Heart left ventricle (tissue), 16 donors: ENCODE measurements at regions of chr7 and their contacts with region 1.

Region 1: DNA sequence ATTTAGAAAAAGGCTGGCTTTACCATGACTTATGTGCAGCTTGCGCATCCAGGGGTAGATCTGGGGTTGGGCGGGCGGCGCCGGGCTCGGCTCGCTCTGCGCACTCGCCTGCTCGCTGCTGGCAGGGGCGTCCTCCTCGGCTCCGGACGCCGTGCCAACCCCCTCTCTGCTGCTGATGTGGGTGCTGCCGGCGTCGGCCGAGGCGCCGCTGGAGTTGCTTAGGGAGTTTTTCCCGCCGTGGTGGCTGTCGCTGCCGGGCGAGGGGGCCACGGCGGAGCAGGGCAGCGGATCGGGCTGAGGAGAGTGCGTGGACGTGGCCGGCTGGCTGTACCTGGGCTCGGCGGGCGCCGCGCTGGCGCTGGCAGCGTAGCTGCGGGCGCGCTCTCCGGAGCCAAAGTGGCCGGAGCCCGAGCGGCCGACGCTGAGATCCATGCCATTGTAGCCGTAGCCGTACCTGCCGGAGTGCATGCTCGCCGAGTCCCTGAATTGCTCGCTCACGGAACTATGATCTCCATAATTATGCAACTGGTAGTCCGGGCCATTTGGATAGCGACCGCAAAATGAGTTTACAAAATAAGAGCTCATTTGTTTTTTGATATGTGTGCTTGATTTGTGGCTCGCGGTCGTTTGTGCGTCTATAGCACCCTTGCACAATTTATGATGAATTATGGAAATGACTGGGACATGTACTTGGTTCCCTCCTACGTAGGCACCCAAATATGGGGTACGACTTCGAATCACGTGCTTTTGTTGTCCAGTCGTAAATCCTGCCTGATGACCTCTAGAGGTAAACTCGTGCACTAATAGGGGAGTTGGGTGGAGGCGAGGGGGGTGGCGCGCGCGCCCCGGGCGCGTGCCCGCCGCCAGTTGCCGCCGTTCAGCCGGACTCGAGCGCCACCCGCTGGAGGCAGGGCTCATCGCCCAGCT is at the start of gene HOXA5:
- DNase-seq: peak in 1 of 5 donors; percentile 60
- ATAC-seq: peak in 3 of 4 donors; percentile 40 to 73 (median 52)
- H3K4me3 ChIP-seq: peak within 1 kb of the TSS; percentile 18 to 69 (median 48)
- H3K27ac ChIP-seq: peak within 1 kb of the TSS in 3 of 12 donors; percentile 30 to 61 (median 35)
- H3K4me1 ChIP-seq: peaks cover 0 to 53% (median 13%) of the 10 kb centered on the region in 12 donors
- H3K27me3 ChIP-seq: peaks cover 79 to 100% (median 99%) of the 10 kb centered on the region in 9 donors
- CTCF ChIP-seq: peak; percentile 14 to 59 (median 43)
- POLR2A ChIP-seq: peak in 1 of 2 donors; percentile 74
- total RNA-seq, gene HOXA5: 0.28 to 2.8 (median 0.44) TPM in 3 of 9 donors, not detected in the others

Region 2: GRCh38 chr7:26681819-26682418 is 461.4 kb before region 1 on chr7:
- intact Hi-C with region 1: loop called in 1 of 10 experiments (anchors 5 kb)
- DNase-seq: no peak
- ATAC-seq: no peak
- H3K4me3 ChIP-seq: no peak overlapping the region
- H3K27ac ChIP-seq: no peak overlapping the region
- H3K4me1 ChIP-seq: peaks cover 0 to 19% (median 0%) of the 10 kb centered on the region in 12 donors
- H3K27me3 ChIP-seq: peaks cover 0 to 35% (median 0%) of the 10 kb centered on the region in 9 donors
- CTCF ChIP-seq: peak; percentile 42 to 86 (median 72)
- POLR2A ChIP-seq: no peak

Region 3: GRCh38 chr7:26853788-26854393 is 289.4 kb before region 1 on chr7:
- intact Hi-C with region 1: loop called in 2 of 10 experiments (anchors 5 kb)
- DNase-seq: no peak
- ATAC-seq: no peak
- H3K4me3 ChIP-seq: no peak overlapping the region
- H3K27ac ChIP-seq: no peak overlapping the region
- H3K4me1 ChIP-seq: peaks cover 0 to 7% (median 0%) of the 10 kb centered on the region in 12 donors
- H3K27me3 ChIP-seq: peaks cover 0 to 71% (median 20%) of the 10 kb centered on the region in 9 donors
- CTCF ChIP-seq: peak in 11 of 12 donors; percentile 15 to 64 (median 51)
- POLR2A ChIP-seq: no peak

Region 4: GRCh38 chr7:27377988-27378387 is 234.7 kb after region 1 on chr7:
- intact Hi-C with region 1: no loop called
- DNase-seq: no peak
- ATAC-seq: no peak
- H3K4me3 ChIP-seq: no peak overlapping the region
- H3K27ac ChIP-seq: no peak overlapping the region
- H3K4me1 ChIP-seq: no peaks in the 10 kb centered on the region
- H3K27me3 ChIP-seq: peaks cover 0 to 15% (median 0%) of the 10 kb centered on the region in 9 donors
- CTCF ChIP-seq: no peak
- POLR2A ChIP-seq: no peak